Activated CD8-positive, alpha-beta memory T cell treated with anti-CD3 and anti-CD28 coated beads, Interleukin-2, amount 10 ng/mL, durations not matched to agents 7 days and 5 days (primary cell): ENCODE measurements at regions of chr12 and their contacts with region 1.

Region 1: DNA sequence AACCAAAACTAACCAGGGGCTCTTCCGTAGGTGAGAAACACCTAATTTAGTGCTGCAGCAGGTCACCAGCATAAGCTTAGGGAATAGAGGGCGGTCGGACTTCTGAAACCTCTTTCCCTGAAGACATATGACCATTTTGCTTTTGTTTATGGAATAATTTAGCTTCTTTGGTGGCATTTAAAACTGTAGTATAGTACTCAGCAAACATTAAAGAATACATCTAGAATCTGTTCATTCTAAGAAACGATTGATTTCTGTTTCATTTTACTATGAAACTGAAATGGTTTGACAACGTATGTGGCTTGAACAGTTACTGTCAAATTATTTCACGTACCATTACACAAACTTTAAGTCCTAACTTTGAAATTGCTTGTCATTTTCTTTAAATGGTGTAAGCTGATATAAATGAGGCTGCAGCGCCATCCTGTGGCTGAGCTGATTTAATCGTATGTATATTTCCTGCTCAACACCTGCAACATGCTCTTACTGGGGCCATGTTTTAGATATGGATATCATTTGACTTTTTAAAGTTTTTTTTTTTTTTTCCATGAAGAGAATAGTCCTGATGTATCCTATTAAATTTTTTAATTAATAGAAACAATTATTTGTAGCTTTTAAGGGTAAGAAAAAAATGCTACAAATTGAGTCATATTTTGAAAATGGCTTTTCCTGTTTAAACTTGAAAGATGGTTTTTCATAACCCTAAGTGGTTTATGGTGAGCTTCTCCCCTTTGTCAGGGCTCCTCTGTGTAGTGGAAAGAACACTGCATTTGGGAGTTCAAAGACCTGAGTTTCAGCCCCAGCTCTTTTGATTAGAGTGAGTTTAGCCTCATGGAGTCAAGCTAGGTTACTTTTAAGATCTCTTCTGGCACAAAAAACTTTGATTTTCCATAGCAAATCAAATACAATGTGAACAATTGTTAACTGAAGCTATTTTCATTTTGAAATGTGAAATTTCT is 27.4 kb downstream of the CFAP54 start:
- DNase-seq: peak; percentile 94
- ATAC-seq: peak; percentile 91
- H3K4me3 Mint-ChIP-seq: peak overlapping the region; percentile 53
- H3K27ac Mint-ChIP-seq: peak overlapping the region; percentile 80
- H3K4me1 Mint-ChIP-seq: peaks cover 21% of the 10 kb centered on the region
- H3K27me3 Mint-ChIP-seq: no peaks in the 10 kb centered on the region

Region 2: DNA sequence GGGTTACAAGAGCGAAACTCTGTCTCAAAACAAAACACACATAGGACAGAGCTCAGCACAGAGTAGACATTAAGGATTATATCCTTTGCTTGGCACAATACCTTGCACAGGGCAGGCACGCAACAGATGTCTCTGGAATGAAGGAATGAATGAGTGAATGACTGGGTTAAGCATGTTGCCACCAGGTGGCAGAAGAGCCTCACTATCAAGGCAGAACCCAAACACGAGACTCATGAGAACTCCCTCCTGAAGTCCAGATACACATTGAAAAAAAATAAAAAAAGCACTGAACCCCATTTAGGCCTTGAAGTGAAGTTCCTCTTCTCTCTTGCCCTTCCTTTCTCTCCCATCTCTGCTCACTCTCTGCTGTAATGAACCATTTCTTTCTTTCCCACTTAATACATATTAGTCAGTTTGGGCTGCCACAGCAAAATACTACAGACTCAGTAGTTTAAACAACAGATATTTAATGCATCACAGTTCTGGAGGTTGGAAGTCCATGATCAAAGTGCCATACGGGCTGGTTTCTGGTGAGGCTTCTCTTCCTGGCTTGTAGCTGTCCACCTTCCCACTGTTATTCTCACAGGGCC is 454.8 kb before region 1 on chr12:
- CTCF ChIA-PET with region 1: interaction called, 28 read pairs
- DNase-seq: peak; percentile 82
- ATAC-seq: peak; percentile 87
- H3K4me3 Mint-ChIP-seq: no peak overlapping the region
- H3K27ac Mint-ChIP-seq: no peak overlapping the region
- H3K4me1 Mint-ChIP-seq: peaks cover 22% of the 10 kb centered on the region
- H3K27me3 Mint-ChIP-seq: no peaks in the 10 kb centered on the region

Region 3: DNA sequence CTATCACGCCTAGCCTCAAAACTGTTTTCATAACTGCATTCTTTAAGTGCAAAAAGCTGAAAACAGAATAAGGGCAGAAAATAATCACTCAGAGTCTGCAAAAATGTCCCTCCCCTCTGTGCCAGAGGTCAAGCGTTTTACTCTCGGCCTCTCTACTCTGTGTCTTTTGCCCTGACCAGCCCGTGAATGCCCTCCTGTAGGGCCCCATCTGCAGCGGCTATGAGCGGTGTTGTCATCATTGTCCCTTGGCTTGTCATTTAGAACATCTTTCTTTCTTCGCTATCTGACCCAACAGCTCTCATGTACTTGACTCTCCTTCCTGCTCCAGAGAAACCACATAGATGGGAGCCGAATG is 300.9 kb before region 1 on chr12:
- CTCF ChIA-PET with region 1: interaction called, 38 read pairs
- DNase-seq: no peak
- ATAC-seq: no peak
- H3K4me3 Mint-ChIP-seq: no peak overlapping the region
- H3K27ac Mint-ChIP-seq: no peak overlapping the region
- H3K4me1 Mint-ChIP-seq: peaks cover 37% of the 10 kb centered on the region
- H3K27me3 Mint-ChIP-seq: no peaks in the 10 kb centered on the region

Region 4: DNA sequence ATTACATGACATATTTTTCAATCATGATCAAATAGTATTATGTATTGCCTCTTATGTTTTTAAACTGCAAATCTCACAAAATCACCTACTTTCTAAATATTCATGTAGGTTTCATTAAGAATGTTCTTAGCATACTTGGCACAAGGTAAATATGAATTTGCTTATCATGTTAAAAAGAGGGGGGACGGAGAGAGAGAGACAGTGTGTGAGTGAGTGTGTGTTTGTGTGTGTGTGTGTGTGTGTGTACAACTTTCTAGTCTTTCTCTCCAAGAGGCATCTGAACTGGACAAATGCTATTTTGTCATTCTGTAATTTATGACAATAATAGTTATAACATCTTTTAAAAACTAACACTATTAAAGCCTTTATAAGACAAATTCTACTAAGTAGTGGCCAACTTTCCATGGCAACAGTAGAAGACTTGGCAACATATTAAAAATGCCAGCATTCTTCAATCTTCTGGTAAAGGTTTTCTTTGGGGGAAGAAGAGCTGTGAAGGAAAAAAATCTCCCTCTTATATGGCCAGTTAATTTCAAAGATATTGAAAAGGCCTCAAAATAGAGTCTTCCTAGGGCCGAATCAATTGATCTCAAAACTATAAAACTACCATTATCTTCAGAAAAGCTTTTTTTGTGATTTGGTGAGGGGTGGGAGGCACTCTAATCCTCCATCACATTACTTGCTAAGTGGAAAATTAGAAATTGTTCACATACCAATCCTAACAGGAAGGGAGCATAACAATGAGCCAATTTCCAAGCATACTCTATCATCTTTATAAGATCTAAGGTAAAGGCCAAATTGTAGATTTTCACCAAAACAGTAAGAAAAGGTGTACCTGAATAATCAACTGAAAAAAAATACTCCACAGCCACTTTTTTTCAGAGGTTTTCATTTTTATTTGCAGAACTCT is 144.7 kb before region 1 on chr12:
- CTCF ChIA-PET with region 1: no interaction called
- DNase-seq: no peak
- ATAC-seq: no peak
- H3K4me3 Mint-ChIP-seq: no peak overlapping the region
- H3K27ac Mint-ChIP-seq: no peak overlapping the region
- H3K4me1 Mint-ChIP-seq: peaks cover 54% of the 10 kb centered on the region
- H3K27me3 Mint-ChIP-seq: no peaks in the 10 kb centered on the region

Region 5: DNA sequence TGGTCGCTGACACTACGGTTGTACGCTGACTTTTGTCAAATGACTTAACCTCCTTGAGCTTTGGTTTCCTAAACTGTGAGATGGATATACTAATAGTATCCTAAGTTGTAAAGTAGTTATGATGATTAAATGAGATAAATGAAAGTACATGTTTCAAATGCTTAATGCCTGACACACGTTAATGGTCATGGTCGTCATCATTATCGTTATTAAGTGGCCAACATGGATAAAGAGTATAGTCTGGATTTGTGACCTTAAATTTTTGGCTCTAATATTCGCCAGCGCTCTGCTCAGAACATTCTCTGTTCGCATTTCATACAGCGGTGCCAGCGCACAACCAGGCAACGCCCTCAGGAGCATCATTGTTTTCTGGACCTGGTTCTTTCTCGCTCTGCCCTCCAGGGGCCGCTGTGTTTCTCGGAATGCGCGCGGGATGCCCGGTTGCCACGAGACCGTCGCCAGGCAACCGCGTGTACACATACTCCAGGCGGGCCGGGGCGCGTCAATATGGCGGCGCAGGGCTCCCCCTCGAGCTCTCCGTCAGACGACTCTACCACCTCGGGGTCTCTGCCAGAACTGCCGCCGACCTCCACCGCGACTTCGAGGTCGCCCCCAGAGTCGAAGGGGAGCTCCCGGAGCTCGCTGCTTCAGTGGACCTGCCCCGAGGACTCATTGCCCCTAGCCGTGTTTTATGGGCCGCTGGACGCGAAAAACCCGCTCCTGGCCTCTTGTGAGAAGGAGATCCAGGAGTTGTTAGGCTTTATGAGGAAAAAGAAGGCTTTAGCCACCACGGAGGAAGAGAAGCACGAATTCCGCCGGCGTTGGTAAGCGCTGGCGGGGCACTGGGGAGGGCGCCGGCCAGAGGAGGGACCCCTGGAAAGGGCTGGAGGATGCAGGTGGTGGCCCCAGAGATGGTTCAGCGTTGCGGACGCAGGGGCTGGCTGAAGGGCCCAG is 27.4 kb before region 1 on chr12 and contains the start of gene CFAP54:
- CTCF ChIA-PET with region 1: interaction called, 84 read pairs
- DNase-seq: peak; percentile 96
- ATAC-seq: peak; percentile 87
- H3K4me3 Mint-ChIP-seq: peak within 1 kb of the TSS; percentile 84
- H3K27ac Mint-ChIP-seq: peak within 1 kb of the TSS; percentile 77
- H3K4me1 Mint-ChIP-seq: peaks cover 35% of the 10 kb centered on the region
- H3K27me3 Mint-ChIP-seq: peaks cover 20% of the 10 kb centered on the region
- total RNA-seq, gene CFAP54: 0.33 to 1.4 TPM